ENCODE measurements at regions of chr20 and their contacts with region 1.

Region 1: GRCh38 chr20:48657475-48658470 is 170.0 kb downstream of the PREX1 start:
- DNase-seq: peak; percentile 52
- ATAC-seq: peak; percentile 87
- H3K4me3 ChIP-seq: no peak overlapping the region
- H3K27ac ChIP-seq: no peak overlapping the region
- H3K4me1 ChIP-seq: no peaks in the 10 kb centered on the region; a peak in 1 of 4 replicates
- H3K27me3 ChIP-seq: no peaks in the 10 kb centered on the region
- CTCF ChIP-seq: peak; percentile 82 to 95 (median 90)
- POLR2A ChIP-seq: no peak
- RAD21 ChIP-seq: peak; percentile 96

Region 2: GRCh38 chr20:48682529-48683251 is 24.9 kb after region 1 on chr20:
- CTCF ChIA-PET with region 1: interaction called, 10 read pairs
- POLR2A ChIA-PET with region 1: no interaction called
- RAD21 ChIA-PET with region 1: no interaction called
- intact Hi-C with region 1: no loop called
- DNase-seq: no peak
- ATAC-seq: peak; percentile 63
- H3K4me3 ChIP-seq: 0 out of 4 replicates have a peak overlapping the region, but pooled peaks have one; percentile 7 to 13
- H3K27ac ChIP-seq: peak overlapping the region; percentile 27; the same call in 1 of the 2 replicates
- H3K4me1 ChIP-seq: peaks cover 22 to 28% of the 10 kb centered on the region in 2 experiments
- H3K27me3 ChIP-seq: no peaks in the 10 kb centered on the region
- CTCF ChIP-seq: no peak
- POLR2A ChIP-seq: no peak
- RAD21 ChIP-seq: no peak

Region 3: GRCh38 chr20:48897246-48897994 is 239.6 kb after region 1 on chr20:
- CTCF ChIA-PET with region 1: interaction called, 21 read pairs
- POLR2A ChIA-PET with region 1: no interaction called
- RAD21 ChIA-PET with region 1: interaction called, 3 to 4 read pairs
- intact Hi-C with region 1: no loop called
- DNase-seq: peak; percentile 35
- ATAC-seq: peak; percentile 85
- H3K4me3 ChIP-seq: no peak overlapping the region
- H3K27ac ChIP-seq: no peak overlapping the region; the same call in 1 of the 2 replicates
- H3K4me1 ChIP-seq: peaks cover 7 to 12% of the 10 kb centered on the region in 2 experiments
- H3K27me3 ChIP-seq: no peaks in the 10 kb centered on the region
- CTCF ChIP-seq: no peak
- POLR2A ChIP-seq: no peak
- RAD21 ChIP-seq: no peak

Region 4: GRCh38 chr20:48904365-48905296 is 246.9 kb after region 1 on chr20:
- CTCF ChIA-PET with region 1: interaction called, 144 read pairs
- POLR2A ChIA-PET with region 1: no interaction called
- RAD21 ChIA-PET with region 1: interaction called, 11 to 14 read pairs
- intact Hi-C with region 1: loop called (anchors 1 kb)
- DNase-seq: peak; percentile 37
- ATAC-seq: peak; percentile 69
- H3K4me3 ChIP-seq: no peak overlapping the region
- H3K27ac ChIP-seq: no peak overlapping the region
- H3K4me1 ChIP-seq: peaks cover 0 to 6% of the 10 kb centered on the region in 2 experiments; a peak in 1 of 4 replicates
- H3K27me3 ChIP-seq: peaks cover 5% of the 10 kb centered on the region; the same call in 1 of the 2 replicates
- CTCF ChIP-seq: peak; percentile 76 to 86 (median 84)
- POLR2A ChIP-seq: no peak
- RAD21 ChIP-seq: peak; percentile 88

Region 5: GRCh38 chr20:48910347-48910791 is 252.6 kb after region 1 on chr20:
- CTCF ChIA-PET with region 1: interaction called, 144 read pairs
- POLR2A ChIA-PET with region 1: no interaction called
- RAD21 ChIA-PET with region 1: interaction called, 11 to 14 read pairs
- intact Hi-C with region 1: loop called (anchors 1 kb)
- DNase-seq: no peak
- ATAC-seq: no peak
- H3K4me3 ChIP-seq: no peak overlapping the region
- H3K27ac ChIP-seq: no peak overlapping the region
- H3K4me1 ChIP-seq: no peaks in the 10 kb centered on the region
- H3K27me3 ChIP-seq: peaks cover 5% of the 10 kb centered on the region; the same call in 1 of the 2 replicates
- CTCF ChIP-seq: no peak
- POLR2A ChIP-seq: no peak
- RAD21 ChIP-seq: no peak

Region 6: GRCh38 chr20:48917296-48917695 is 259.5 kb after region 1 on chr20:
- CTCF ChIA-PET with region 1: interaction called, 11 read pairs
- POLR2A ChIA-PET with region 1: interaction called, 3 read pairs
- RAD21 ChIA-PET with region 1: interaction called, 3 to 4 read pairs
- intact Hi-C with region 1: no loop called
- DNase-seq: no peak
- ATAC-seq: no peak
- H3K4me3 ChIP-seq: no peak overlapping the region
- H3K27ac ChIP-seq: no peak overlapping the region
- H3K4me1 ChIP-seq: peaks cover 0 to 9% of the 10 kb centered on the region in 2 experiments; a peak in 1 of 4 replicates
- H3K27me3 ChIP-seq: no peaks in the 10 kb centered on the region
- CTCF ChIP-seq: no peak
- POLR2A ChIP-seq: no peak
- RAD21 ChIP-seq: no peak

Region 7: GRCh38 chr20:49122920-49123319 is 465.1 kb after region 1 on chr20:
- CTCF ChIA-PET with region 1: no interaction called
- POLR2A ChIA-PET with region 1: no interaction called
- RAD21 ChIA-PET with region 1: interaction called in 1 of 2 experiments, 13 read pairs
- intact Hi-C with region 1: no loop called
- DNase-seq: no peak
- ATAC-seq: no peak
- H3K4me3 ChIP-seq: no peak overlapping the region
- H3K27ac ChIP-seq: no peak overlapping the region
- H3K4me1 ChIP-seq: no peaks in the 10 kb centered on the region
- H3K27me3 ChIP-seq: no peaks in the 10 kb centered on the region
- CTCF ChIP-seq: no peak
- POLR2A ChIP-seq: no peak
- RAD21 ChIP-seq: no peak

Region 8: DNA sequence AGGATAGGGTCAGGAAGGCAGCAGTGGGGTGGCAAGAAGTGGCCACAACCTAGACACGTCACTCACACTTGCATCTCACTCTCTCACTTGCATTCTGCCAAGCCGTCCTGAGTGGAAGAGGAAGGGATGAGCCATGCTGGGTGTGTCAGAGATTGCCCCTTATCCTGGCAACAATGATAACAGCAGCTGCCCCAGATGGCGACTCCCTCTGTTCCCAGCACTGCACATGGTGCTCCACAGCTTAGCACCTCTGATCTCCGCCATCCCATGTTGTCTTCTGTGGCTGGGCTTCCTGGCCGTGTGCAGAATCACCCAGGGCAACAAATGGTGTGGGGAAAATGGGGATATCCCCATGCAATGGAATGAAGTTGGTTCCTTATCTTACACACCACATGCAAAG is 813.6 kb after region 1 on chr20:
- CTCF ChIA-PET with region 1: no interaction called
- POLR2A ChIA-PET with region 1: no interaction called
- RAD21 ChIA-PET with region 1: no interaction called
- intact Hi-C with region 1: no loop called
- DNase-seq: no peak
- ATAC-seq: no peak
- H3K4me3 ChIP-seq: no peak overlapping the region
- H3K27ac ChIP-seq: no peak overlapping the region
- H3K4me1 ChIP-seq: peaks cover 0 to 7% of the 10 kb centered on the region in 2 experiments; a peak in 1 of 4 replicates
- H3K27me3 ChIP-seq: peaks cover 19% of the 10 kb centered on the region
- CTCF ChIP-seq: no peak
- POLR2A ChIP-seq: no peak
- RAD21 ChIP-seq: no peak

Measured in HCT116 (cell line).